ENCODE measurements at regions of chr16 and their contacts with region 1.

Region 1: GRCh38 chr16:72124761-72125634 is 31.4 kb downstream of the DHX38 start:
- DNase-seq: peak; percentile 51
- H3K4me3 ChIP-seq: no peak overlapping the region
- H3K27ac ChIP-seq: no peak overlapping the region
- H3K4me1 ChIP-seq: no peaks in the 10 kb centered on the region
- H3K27me3 ChIP-seq: no peaks in the 10 kb centered on the region
- CTCF ChIP-seq: peak; percentile 74 to 84

Region 2: GRCh38 chr16:72206299-72206698 is 81.3 kb after region 1 on chr16:
- CTCF ChIA-PET with region 1: no interaction called
- dilution Hi-C with region 1: loop called (anchors 5 kb)
- in situ Hi-C with region 1: no loop called
- intact Hi-C with region 1: no loop called
- DNase-seq: no peak
- H3K4me3 ChIP-seq: no peak overlapping the region
- H3K27ac ChIP-seq: no peak overlapping the region
- H3K4me1 ChIP-seq: peaks cover 23% of the 10 kb centered on the region
- H3K27me3 ChIP-seq: peaks cover 3% of the 10 kb centered on the region
- CTCF ChIP-seq: no peak

Region 3: GRCh38 chr16:72234387-72234786 is 109.4 kb after region 1 on chr16:
- CTCF ChIA-PET with region 1: no interaction called
- dilution Hi-C with region 1: no loop called
- in situ Hi-C with region 1: loop called in 1 of 2 experiments (anchors 10 kb)
- intact Hi-C with region 1: no loop called
- DNase-seq: no peak
- H3K4me3 ChIP-seq: no peak overlapping the region
- H3K27ac ChIP-seq: no peak overlapping the region
- H3K4me1 ChIP-seq: peaks cover 5% of the 10 kb centered on the region
- H3K27me3 ChIP-seq: no peaks in the 10 kb centered on the region
- CTCF ChIP-seq: no peak

Region 4: DNA sequence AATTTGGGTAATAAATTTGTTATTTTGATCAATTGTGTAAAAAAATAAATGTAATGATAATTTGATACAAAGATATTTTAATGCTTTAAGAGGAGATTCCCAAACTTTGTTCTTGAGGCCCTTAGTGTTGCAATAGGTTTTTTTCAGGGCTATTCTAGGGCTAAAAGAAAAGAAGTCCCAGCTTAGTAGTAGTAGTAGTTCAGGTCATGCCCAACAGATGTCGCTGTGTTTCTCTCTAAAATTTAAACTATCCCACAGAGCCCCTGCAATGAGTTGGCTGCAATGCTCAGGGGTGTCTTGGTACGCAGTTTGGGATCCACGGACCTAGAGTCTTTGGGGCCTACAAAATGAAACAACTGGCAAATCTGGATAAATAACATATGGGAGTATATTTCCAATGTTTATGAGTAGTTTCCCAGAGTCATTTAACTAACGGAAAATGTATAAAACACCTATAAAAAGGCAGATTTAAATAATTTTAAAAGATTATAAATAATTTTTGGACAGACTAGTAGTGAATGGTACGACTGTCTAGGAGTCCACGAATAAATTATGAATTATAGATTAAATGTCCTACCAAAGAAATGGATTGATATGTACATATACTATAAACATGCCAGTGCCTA is 275.4 kb after region 1 on chr16:
- CTCF ChIA-PET with region 1: no interaction called
- dilution Hi-C with region 1: no loop called
- in situ Hi-C with region 1: no loop called
- intact Hi-C with region 1: loop called (anchors 10 kb)
- DNase-seq: peak; percentile 28
- H3K4me3 ChIP-seq: no peak overlapping the region
- H3K27ac ChIP-seq: no peak overlapping the region
- H3K4me1 ChIP-seq: no peaks in the 10 kb centered on the region
- H3K27me3 ChIP-seq: no peaks in the 10 kb centered on the region
- CTCF ChIP-seq: peak; percentile 68 to 74

Region 5: DNA sequence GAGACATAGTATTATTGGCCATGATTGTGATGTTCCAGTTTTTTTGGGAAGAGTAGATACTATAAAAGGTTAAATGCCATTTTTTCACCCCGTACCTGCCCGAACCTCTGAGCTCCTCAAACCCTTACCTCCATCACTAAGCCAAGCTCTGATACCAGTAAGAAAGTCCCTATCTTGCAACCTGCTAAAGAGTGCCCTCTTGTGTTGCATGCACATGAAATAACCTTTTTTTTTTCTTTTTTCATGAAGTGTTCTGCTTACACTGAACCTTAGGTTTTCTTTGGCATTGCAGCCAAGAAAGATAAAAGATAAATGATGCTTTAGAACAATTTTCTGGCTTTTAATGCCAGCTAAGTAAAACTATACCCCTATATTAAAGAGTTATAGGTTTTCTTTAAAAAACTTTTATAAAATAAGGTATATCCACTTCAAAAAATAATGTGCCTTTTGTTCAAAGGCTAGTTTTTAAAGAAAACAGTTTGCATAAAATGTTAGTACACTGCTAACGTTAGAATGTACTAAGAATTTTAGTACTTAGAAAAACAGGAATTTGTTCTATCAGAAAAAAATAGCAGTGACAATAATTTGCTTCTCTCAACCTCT is 342.3 kb after region 1 on chr16:
- CTCF ChIA-PET with region 1: interaction called, 3 read pairs
- dilution Hi-C with region 1: no loop called
- in situ Hi-C with region 1: loop called (anchors 10 kb)
- intact Hi-C with region 1: loop called (anchors 1 kb)
- DNase-seq: peak; percentile 41
- H3K4me3 ChIP-seq: no peak overlapping the region
- H3K27ac ChIP-seq: no peak overlapping the region
- H3K4me1 ChIP-seq: no peaks in the 10 kb centered on the region
- H3K27me3 ChIP-seq: no peaks in the 10 kb centered on the region
- CTCF ChIP-seq: peak; percentile 68 to 81

Region 6: GRCh38 chr16:73232555-73233328 is 1107.7 kb after region 1 on chr16:
- CTCF ChIA-PET with region 1: no interaction called
- dilution Hi-C with region 1: no loop called
- in situ Hi-C with region 1: no loop called
- intact Hi-C with region 1: no loop called
- DNase-seq: peak; percentile 12
- H3K4me3 ChIP-seq: no peak overlapping the region
- H3K27ac ChIP-seq: no peak overlapping the region
- H3K4me1 ChIP-seq: no peaks in the 10 kb centered on the region
- H3K27me3 ChIP-seq: no peaks in the 10 kb centered on the region
- CTCF ChIP-seq: no peak

Measured in mammary epithelial cell (primary cell).